ENCODE measurements at regions of chrX and their contacts with region 1.

Region 1: GRCh38 chrX:45824471-45824870 is 623.8 kb upstream of the DIPK2B start:
- DNase-seq: peak; percentile 92
- H3K4me3 ChIP-seq: no peak overlapping the region
- H3K27ac ChIP-seq: peak overlapping the region; percentile 29
- H3K4me1 ChIP-seq: peaks cover 7% of the 10 kb centered on the region
- H3K27me3 ChIP-seq: no peaks in the 10 kb centered on the region
- CTCF ChIP-seq: peak; percentile 63 to 80
- POLR2A ChIP-seq: no peak

Region 2: GRCh38 chrX:45769761-45770582 is 54.5 kb before region 1 on chrX:
- CTCF ChIA-PET with region 1: interaction called, 6 read pairs
- POLR2A ChIA-PET with region 1: no interaction called
- dilution Hi-C with region 1: no loop called
- intact Hi-C with region 1: loop called (anchors 1 kb)
- DNase-seq: peak; percentile 87
- H3K4me3 ChIP-seq: peak overlapping the region; percentile 55 to 100 (median 94)
- H3K27ac ChIP-seq: peak overlapping the region; percentile 87
- H3K4me1 ChIP-seq: peaks cover 40% of the 10 kb centered on the region
- H3K27me3 ChIP-seq: no peaks in the 10 kb centered on the region
- CTCF ChIP-seq: no peak
- POLR2A ChIP-seq: peak; percentile 70

Region 3: DNA sequence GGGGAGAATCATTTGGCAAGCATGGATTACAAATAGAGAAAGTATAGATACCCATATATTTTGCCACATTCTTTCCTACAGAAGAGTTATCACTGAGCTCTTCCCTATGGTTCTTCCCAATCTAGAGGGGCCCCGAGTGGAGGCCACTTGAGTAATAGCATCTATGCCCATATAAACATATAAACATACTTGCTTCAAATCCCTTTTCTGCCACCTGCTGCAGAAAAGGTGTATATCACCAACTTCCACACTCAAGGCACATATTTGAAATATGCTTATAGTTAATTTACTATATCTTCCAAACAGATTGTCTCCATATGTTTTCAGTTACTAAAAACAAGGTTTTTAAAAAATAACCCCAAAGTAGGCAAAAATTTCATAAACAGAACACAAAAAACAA is 19.0 kb after region 1 on chrX:
- CTCF ChIA-PET with region 1: interaction called, 17 read pairs
- POLR2A ChIA-PET with region 1: no interaction called
- dilution Hi-C with region 1: no loop called
- intact Hi-C with region 1: loop called (anchors 2 kb)
- DNase-seq: peak; percentile 22
- H3K4me3 ChIP-seq: no peak overlapping the region
- H3K27ac ChIP-seq: no peak overlapping the region
- H3K4me1 ChIP-seq: peaks cover 11% of the 10 kb centered on the region
- H3K27me3 ChIP-seq: no peaks in the 10 kb centered on the region
- CTCF ChIP-seq: no peak
- POLR2A ChIP-seq: no peak

Region 4: GRCh38 chrX:46325312-46325877 is 500.9 kb after region 1 on chrX:
- CTCF ChIA-PET with region 1: interaction called, 4 read pairs
- POLR2A ChIA-PET with region 1: no interaction called
- dilution Hi-C with region 1: no loop called
- intact Hi-C with region 1: loop called (anchors 2 kb)
- DNase-seq: peak; percentile 69
- H3K4me3 ChIP-seq: no peak overlapping the region
- H3K27ac ChIP-seq: peak overlapping the region; percentile 98
- H3K4me1 ChIP-seq: peaks cover 36% of the 10 kb centered on the region
- H3K27me3 ChIP-seq: no peaks in the 10 kb centered on the region
- CTCF ChIP-seq: no peak
- POLR2A ChIP-seq: no peak

Region 5: GRCh38 chrX:46381630-46382029 is 557.2 kb after region 1 on chrX:
- CTCF ChIA-PET with region 1: interaction called, 55 read pairs
- POLR2A ChIA-PET with region 1: no interaction called
- dilution Hi-C with region 1: no loop called
- intact Hi-C with region 1: loop called (anchors 1 kb)
- DNase-seq: peak; percentile 24
- H3K4me3 ChIP-seq: no peak overlapping the region
- H3K27ac ChIP-seq: no peak overlapping the region
- H3K4me1 ChIP-seq: peaks cover 4% of the 10 kb centered on the region
- H3K27me3 ChIP-seq: no peaks in the 10 kb centered on the region
- CTCF ChIP-seq: peak; percentile 16 to 40
- POLR2A ChIP-seq: no peak

Measured in endothelial cell of umbilical vein (primary cell).